ENCODE measurements at regions of chr12 and their contacts with region 1.

Region 1: DNA sequence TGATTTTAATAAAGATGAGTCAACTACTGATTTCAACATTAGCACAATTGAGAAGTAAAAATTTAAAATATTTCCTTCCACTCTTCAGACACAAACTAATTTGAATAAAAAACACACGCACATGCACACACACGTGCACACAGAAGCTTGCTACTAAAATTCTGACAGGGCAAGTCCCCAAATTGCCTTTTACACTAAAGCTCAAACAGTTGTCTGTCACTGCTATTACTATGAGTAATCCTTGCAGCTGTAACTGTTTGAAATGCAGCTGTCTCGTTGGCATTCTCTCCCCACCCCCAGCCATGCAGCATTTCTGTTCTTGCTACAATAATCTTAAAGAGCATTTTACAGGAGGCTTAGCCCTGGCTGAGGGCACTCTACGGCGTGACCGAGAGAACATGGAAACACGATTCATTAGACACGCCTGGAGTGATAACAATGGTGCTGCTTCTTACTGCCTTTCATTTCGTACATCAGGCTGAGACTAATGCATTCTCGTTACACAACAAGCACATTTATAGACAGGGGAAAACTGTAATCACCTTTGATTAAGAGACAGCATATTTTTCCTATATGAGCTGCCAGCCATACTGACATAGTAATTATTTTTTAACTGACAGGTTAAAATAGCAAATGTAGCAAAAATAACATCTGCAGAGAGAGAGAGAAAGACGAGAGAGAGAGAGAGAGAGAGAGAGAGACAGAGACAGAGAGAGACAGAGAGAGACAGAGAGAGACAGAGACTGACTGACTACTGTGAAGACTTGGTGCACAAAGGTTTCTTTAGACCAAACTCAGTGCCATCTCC is 153.8 kb downstream of the MED13L start:
- DNase-seq: peak; percentile 79
- H3K4me3 Mint-ChIP-seq: peak overlapping the region; percentile 36
- H3K27ac Mint-ChIP-seq: no peak overlapping the region
- H3K4me1 Mint-ChIP-seq: peaks cover 65% of the 10 kb centered on the region
- H3K27me3 Mint-ChIP-seq: no peaks in the 10 kb centered on the region

Region 2: DNA sequence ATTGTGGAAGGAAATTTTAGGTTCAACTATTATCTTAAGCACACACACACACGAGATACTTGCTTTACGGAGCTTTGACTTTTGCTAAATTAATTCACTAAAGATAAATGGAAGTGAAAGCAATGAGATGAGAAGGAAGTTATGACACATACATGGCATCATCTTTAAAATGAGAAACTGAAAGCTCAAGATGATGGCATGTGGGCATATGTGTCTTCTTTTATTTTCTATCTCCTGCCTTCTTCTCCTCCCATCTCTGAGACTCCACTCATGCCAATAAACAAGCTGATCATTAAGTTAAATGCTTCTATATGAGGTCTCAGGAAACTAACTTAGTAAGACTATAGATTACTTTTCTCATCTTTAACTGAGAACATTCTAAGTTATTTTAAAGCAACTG is 62.9 kb before region 1 on chr12:
- CTCF ChIA-PET with region 1: no interaction called
- intact Hi-C with region 1: loop called (anchors 2 kb)
- DNase-seq: no peak
- H3K4me3 Mint-ChIP-seq: peak overlapping the region; percentile 56
- H3K27ac Mint-ChIP-seq: peak overlapping the region; percentile 81
- H3K4me1 Mint-ChIP-seq: peaks cover 52% of the 10 kb centered on the region
- H3K27me3 Mint-ChIP-seq: no peaks in the 10 kb centered on the region

Region 3: DNA sequence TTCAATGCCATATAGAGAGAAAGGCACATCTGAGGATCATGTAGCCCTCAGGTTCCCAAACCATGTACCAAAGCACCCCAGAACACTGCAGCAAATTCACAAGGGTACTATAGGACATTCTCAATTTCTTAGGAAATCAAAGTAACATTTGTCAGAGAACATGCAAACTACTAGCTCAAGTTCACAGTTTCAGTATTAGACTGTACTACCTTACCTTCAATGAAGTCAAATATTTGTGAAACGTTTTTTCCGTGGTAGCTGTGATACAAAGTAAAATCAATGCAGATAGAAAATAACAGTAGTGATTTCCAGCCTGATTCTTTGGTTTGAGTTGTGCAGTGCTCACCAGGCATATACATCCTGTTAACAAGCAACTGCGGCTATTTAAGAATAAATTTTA is 43.2 kb before region 1 on chr12:
- CTCF ChIA-PET with region 1: no interaction called
- intact Hi-C with region 1: loop called (anchors 5 kb)
- DNase-seq: no peak
- H3K4me3 Mint-ChIP-seq: no peak overlapping the region
- H3K27ac Mint-ChIP-seq: no peak overlapping the region
- H3K4me1 Mint-ChIP-seq: peaks cover 15% of the 10 kb centered on the region
- H3K27me3 Mint-ChIP-seq: no peaks in the 10 kb centered on the region

Region 4: DNA sequence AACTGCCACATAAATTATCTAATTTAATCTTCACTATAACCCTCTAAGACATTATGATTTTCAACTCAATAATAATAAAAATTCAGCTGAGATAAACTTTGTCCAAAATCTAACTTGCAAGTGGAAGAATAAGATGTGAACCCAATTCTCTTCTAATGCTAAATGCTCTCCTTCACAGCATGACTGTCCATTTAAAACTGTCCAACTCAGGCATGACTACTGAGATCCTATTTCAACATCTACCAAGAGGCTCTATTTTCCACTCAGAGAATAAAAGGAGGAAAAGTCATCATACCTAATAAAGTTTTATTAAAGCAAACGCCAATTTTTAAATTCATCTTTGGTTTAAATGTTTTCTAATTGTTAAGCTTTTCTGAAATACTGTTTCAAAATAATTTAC is 29.7 kb before region 1 on chr12:
- CTCF ChIA-PET with region 1: no interaction called
- intact Hi-C with region 1: loop called (anchors 2 kb)
- DNase-seq: no peak
- H3K4me3 Mint-ChIP-seq: no peak overlapping the region
- H3K27ac Mint-ChIP-seq: no peak overlapping the region
- H3K4me1 Mint-ChIP-seq: peaks cover 25% of the 10 kb centered on the region
- H3K27me3 Mint-ChIP-seq: no peaks in the 10 kb centered on the region

Region 5: DNA sequence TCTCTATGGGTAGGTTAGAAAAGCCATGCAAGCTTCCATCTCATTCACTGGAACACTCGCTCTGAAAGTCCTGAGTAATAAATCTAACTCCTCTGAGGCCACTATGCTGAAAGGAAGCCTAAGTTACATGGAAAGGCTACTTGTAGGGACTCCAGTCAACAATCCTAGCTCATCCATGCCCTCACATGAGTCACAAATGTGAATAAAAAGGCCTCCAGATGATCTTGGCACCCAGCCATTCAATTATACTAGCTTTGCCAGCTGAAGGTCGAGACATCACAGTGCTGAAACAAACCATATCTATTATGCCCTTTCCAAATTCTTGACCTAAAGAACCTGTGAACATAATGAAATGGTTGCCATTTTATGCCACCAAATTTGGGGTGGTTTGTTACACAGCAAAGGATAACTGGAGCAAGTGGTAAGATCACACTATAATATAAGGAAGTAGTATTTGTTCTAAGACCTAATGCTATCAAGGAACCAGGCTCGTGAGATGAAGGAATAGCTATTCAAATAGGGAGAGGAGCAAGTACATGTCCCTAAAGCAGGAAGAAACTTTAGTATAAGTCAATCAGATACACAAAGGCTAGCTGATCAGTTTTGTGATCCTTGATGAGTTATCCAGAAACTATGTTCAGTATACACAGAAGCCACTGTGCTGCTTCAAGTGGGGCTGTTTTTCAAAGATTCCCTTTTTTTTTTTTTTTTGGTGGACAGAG is 11.7 kb after region 1 on chr12:
- CTCF ChIA-PET with region 1: interaction called, 4 read pairs
- intact Hi-C with region 1: loop called (anchors 1 kb)
- DNase-seq: no peak
- H3K4me3 Mint-ChIP-seq: no peak overlapping the region
- H3K27ac Mint-ChIP-seq: peak overlapping the region; percentile 89
- H3K4me1 Mint-ChIP-seq: peaks cover 76% of the 10 kb centered on the region
- H3K27me3 Mint-ChIP-seq: no peaks in the 10 kb centered on the region

Region 6: GRCh38 chr12:116172224-116172849 is 48.7 kb after region 1 on chr12:
- CTCF ChIA-PET with region 1: interaction called, 3 read pairs
- intact Hi-C with region 1: loop called (anchors 1 kb)
- DNase-seq: peak; percentile 78
- H3K4me3 Mint-ChIP-seq: peak overlapping the region; percentile 58
- H3K27ac Mint-ChIP-seq: peak overlapping the region; percentile 92
- H3K4me1 Mint-ChIP-seq: peaks cover 67% of the 10 kb centered on the region
- H3K27me3 Mint-ChIP-seq: no peaks in the 10 kb centered on the region

Region 7: DNA sequence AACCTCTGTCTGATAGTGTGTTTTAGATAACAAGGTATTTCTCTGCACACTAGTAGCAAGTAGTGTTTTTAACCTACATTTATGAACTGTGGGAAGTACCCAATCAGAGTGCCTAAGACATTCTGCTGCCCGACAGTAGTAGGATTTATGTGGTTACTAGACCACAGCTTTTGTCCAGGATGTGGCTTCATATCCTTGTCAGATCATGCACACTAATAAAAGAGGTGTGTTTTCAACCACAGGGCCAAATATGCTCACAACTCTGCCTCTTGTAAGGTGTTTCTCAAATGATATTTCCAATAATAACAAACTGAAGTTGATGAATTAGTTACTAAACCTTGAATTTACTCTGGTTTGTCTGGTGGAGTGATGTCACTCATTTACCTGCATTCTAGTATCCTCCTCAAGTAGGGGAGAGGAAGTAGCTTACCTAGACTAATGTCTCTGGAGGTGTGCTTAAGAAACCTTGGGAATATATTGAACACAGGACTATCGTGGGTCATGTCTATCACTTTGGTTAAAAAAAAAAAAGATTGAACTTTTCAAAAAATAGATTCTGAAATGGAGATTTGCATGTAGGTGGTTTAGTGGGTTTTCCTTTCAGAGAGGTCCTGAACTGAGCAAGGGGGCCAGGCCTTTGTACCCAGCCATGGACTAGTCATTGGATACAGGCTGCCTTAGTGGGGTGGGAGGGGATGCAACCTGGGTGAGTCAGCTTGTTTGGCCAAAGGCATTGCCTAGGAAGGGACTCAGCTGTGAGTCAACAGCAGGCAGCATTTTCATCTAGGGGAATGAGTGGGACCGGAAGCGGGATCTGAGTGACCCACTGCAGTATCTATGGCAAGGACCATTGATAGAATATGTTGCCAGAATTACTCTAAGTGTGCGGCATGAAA is 801.2 kb after region 1 on chr12:
- CTCF ChIA-PET with region 1: no interaction called
- intact Hi-C with region 1: loop called (anchors 10 kb)
- DNase-seq: peak; percentile 70
- H3K4me3 Mint-ChIP-seq: no peak overlapping the region
- H3K27ac Mint-ChIP-seq: no peak overlapping the region
- H3K4me1 Mint-ChIP-seq: peaks cover 66% of the 10 kb centered on the region
- H3K27me3 Mint-ChIP-seq: peaks cover 3% of the 10 kb centered on the region